Caco-2 (cell line): ENCODE measurements at regions of chr3 and their contacts with region 1.

Region 1: DNA sequence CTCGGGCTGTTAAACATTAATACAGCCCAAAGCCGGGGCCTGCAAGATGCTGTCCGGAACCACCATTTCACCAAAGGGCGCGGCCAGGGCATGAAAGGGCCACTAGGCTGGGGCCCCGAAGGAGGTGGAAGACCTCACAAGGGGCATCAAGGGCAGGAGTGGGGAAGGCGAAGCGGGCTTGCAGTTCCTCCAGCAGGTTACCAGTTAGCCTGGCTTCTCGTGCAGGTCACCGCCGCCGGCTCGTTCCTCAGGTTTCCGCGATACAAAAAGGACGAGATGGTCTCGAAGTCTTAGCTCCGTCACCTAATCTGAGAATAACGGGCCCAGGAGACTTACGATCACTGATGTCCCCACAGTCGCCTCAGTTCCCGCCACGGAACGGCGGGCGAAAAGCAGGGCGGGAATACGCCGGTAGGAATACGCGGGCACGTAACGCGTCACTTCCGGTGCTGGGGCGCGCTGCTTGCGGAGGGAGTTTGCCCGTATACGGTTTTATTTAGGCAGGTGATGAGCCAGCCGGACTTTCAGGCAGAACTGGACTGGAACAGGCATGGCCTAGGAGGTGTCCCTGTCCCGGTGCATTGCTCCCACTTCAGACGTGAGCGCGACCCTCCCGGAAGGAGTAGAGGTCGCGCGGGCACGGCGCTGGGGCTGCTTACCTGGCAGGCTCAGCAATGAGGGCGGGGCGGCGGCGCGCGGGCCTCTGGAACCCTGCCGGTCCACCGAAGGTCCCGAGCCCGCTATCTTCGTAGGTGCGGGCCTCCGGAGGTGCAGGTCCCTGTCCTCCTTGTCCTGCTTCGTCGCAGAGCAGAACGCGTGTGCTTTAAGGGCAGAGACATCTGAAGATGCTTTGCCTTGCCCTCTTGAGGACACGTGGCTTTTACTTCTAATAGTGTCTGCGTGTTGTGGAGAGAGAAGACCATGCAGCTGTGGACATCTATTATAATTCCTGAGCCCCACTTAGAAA is at the start of gene RFC4:
- DNase-seq: peak; percentile 87
- H3K4me3 ChIP-seq: peak within 1 kb of the TSS; percentile 73
- H3K4me3 Mint-ChIP-seq: peak within 1 kb of the TSS; percentile 74
- H3K27ac Mint-ChIP-seq: peak within 1 kb of the TSS; percentile 84
- H3K4me1 ChIP-seq: no peaks in the 10 kb centered on the region
- H3K4me1 Mint-ChIP-seq: no peaks in the 10 kb centered on the region
- H3K27me3 ChIP-seq: no peaks in the 10 kb centered on the region
- H3K27me3 Mint-ChIP-seq: no peaks in the 10 kb centered on the region
- CTCF ChIP-seq: no peak
- total RNA-seq, gene RFC4: 52.6 and 62.2 TPM in 2 replicates

Region 2: DNA sequence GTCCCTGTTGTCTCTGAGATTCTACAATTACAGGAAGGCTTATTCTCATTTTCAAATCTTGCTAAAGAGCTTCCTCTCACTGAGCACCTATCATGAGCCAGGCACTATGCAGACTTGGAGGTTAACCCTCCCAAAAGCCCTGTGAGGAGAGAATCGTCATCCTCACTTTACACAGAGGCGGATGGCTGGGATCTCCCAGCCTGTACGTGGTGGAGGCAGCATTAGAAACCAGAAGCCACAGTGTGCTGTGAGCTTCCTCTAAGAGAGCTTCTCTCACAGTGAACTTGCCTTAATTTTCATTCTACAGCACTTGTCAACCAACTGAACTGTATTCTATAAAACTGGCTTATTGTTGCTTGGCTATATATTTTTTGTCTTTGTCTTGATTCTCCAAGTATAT is 438.2 kb before region 1 on chr3:
- CTCF ChIA-PET with region 1: no interaction called
- POLR2A ChIA-PET with region 1: interaction called, 11 read pairs
- intact Hi-C with region 1: no loop called
- DNase-seq: no peak
- H3K4me3 ChIP-seq: no peak overlapping the region
- H3K4me3 Mint-ChIP-seq: no peak overlapping the region
- H3K27ac Mint-ChIP-seq: no peak overlapping the region
- H3K4me1 ChIP-seq: peaks cover 6% of the 10 kb centered on the region; the same call in 1 of the 2 replicates
- H3K4me1 Mint-ChIP-seq: no peaks in the 10 kb centered on the region
- H3K27me3 ChIP-seq: no peaks in the 10 kb centered on the region
- H3K27me3 Mint-ChIP-seq: peaks cover 10% of the 10 kb centered on the region
- CTCF ChIP-seq: no peak

Region 3: DNA sequence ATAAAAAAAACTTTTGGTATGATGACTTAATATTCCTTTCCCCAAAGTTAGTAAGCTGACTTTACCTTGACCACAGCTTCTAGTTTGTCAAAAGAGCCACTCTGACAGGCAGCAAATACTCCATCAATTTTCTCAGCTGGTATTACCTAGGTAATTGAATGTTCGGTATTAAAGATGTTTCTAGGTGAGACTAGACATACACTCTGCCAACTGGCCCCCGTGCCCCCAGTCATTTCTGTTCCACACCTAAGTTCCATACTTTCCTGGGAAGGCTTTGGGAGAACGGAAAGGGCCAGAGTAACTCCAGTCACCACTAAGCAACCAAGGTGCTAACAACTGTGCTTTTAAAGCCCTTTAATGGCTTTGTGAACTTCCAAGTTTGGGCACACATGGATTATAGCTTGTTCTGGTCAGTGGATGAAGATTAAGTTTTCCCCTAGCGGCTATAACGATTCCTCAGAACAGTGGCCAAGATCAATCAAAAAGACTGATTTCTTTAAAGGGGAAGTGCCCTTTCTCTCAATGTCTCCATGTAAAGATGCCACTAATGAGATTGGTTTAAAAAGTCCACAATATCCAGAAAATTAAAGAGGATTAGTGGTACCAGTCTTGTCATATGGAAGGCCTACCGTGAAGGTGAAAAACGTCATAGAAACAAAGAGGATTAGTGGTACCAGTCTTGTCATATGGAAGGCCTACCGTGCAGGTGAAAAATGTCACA is 16.0 kb before region 1 on chr3:
- CTCF ChIA-PET with region 1: no interaction called
- POLR2A ChIA-PET with region 1: interaction called, 3 read pairs
- intact Hi-C with region 1: loop called (anchors 2 kb)
- DNase-seq: peak in 1 of 2 experiments; percentile 45
- H3K4me3 ChIP-seq: no peak overlapping the region
- H3K4me3 Mint-ChIP-seq: no peak overlapping the region
- H3K27ac Mint-ChIP-seq: peak overlapping the region; percentile 45
- H3K4me1 ChIP-seq: peaks cover 6% of the 10 kb centered on the region; the same call in 1 of the 2 replicates
- H3K4me1 Mint-ChIP-seq: peaks cover 8% of the 10 kb centered on the region
- H3K27me3 ChIP-seq: no peaks in the 10 kb centered on the region
- H3K27me3 Mint-ChIP-seq: no peaks in the 10 kb centered on the region
- CTCF ChIP-seq: no peak